ENCODE measurements at regions of chr22 and their contacts with region 1.

Region 1: GRCh38 chr22:28728621-28729313 is 12.9 kb downstream of the CHEK2 start:
- DNase-seq: no peak
- H3K4me3 ChIP-seq: no peak overlapping the region
- H3K27ac ChIP-seq: no peak overlapping the region
- H3K4me1 ChIP-seq: no peaks in the 10 kb centered on the region
- H3K27me3 ChIP-seq: no peaks in the 10 kb centered on the region
- CTCF ChIP-seq: no peak

Region 2: GRCh38 chr22:26756675-26757293 is 1972.0 kb before region 1 on chr22:
- CTCF ChIA-PET with region 1: no interaction called
- POLR2A ChIA-PET with region 1: interaction called, 15 read pairs
- intact Hi-C with region 1: no loop called
- DNase-seq: peak; percentile 69
- H3K4me3 ChIP-seq: no peak overlapping the region
- H3K27ac ChIP-seq: no peak overlapping the region
- H3K4me1 ChIP-seq: no peaks in the 10 kb centered on the region
- H3K27me3 ChIP-seq: no peaks in the 10 kb centered on the region
- CTCF ChIP-seq: peak; percentile 81

Measured in A673 (cell line).